ENCODE measurements at regions of chr14 and their contacts with region 1.

Region 1: GRCh38 chr14:63437953-63438757 is 105.0 kb downstream of the PPP2R5E start:
- DNase-seq: peak in 7 of 9 donors; percentile 8 to 41 (median 21)
- ATAC-seq: peak; percentile 67
- H3K4me3 ChIP-seq: no peak overlapping the region
- H3K4me3 Mint-ChIP-seq: peak overlapping the region in 9 of 10 donors; percentile 18 to 75 (median 59)
- H3K27ac ChIP-seq: no peak overlapping the region
- H3K27ac Mint-ChIP-seq: peak overlapping the region in 7 of 9 donors; percentile 2 to 82 (median 59)
- H3K4me1 ChIP-seq: peaks cover 0 to 19% of the 10 kb centered on the region in 2 donors
- H3K4me1 Mint-ChIP-seq: peaks cover 43 to 82% (median 72%) of the 10 kb centered on the region in 7 donors
- H3K27me3 ChIP-seq: no peaks in the 10 kb centered on the region
- H3K27me3 Mint-ChIP-seq: no peaks in the 10 kb centered on the region

Region 2: GRCh38 chr14:63032076-63032475 is 406.1 kb before region 1 on chr14:
- CTCF ChIA-PET with region 1: no interaction called
- POLR2A ChIA-PET with region 1: no interaction called
- intact Hi-C with region 1: no loop called
- DNase-seq: no peak
- ATAC-seq: no peak
- H3K4me3 ChIP-seq: no peak overlapping the region
- H3K4me3 Mint-ChIP-seq: no peak overlapping the region
- H3K27ac ChIP-seq: no peak overlapping the region
- H3K27ac Mint-ChIP-seq: no peak overlapping the region
- H3K4me1 ChIP-seq: no peaks in the 10 kb centered on the region
- H3K4me1 Mint-ChIP-seq: no peaks in the 10 kb centered on the region
- H3K27me3 ChIP-seq: no peaks in the 10 kb centered on the region
- H3K27me3 Mint-ChIP-seq: peaks cover 0 to 16% (median 9%) of the 10 kb centered on the region in 5 donors

Region 3: GRCh38 chr14:63453443-63453936 is 15.3 kb after region 1 on chr14:
- CTCF ChIA-PET with region 1: interaction called, 4 read pairs
- POLR2A ChIA-PET with region 1: no interaction called
- intact Hi-C with region 1: loop called in 1 of 2 experiments (anchors 2 kb)
- DNase-seq: no peak
- ATAC-seq: no peak
- H3K4me3 ChIP-seq: no peak overlapping the region
- H3K4me3 Mint-ChIP-seq: no peak overlapping the region
- H3K27ac ChIP-seq: no peak overlapping the region
- H3K27ac Mint-ChIP-seq: peak overlapping the region in 1 of 9 donors; percentile 2
- H3K4me1 ChIP-seq: no peaks in the 10 kb centered on the region
- H3K4me1 Mint-ChIP-seq: peaks cover 11 to 57% (median 34%) of the 10 kb centered on the region in 7 donors
- H3K27me3 ChIP-seq: no peaks in the 10 kb centered on the region
- H3K27me3 Mint-ChIP-seq: no peaks in the 10 kb centered on the region

Region 4: GRCh38 chr14:63478010-63478409 is 39.9 kb after region 1 on chr14:
- CTCF ChIA-PET with region 1: no interaction called
- POLR2A ChIA-PET with region 1: no interaction called
- intact Hi-C with region 1: loop called in 1 of 2 experiments (anchors 2 kb)
- DNase-seq: peak in 1 of 9 donors; percentile 14
- ATAC-seq: peak; percentile 60
- H3K4me3 ChIP-seq: peak overlapping the region; percentile 31
- H3K4me3 Mint-ChIP-seq: peak overlapping the region in 8 of 10 donors; percentile 22 to 75 (median 64)
- H3K27ac ChIP-seq: no peak overlapping the region
- H3K27ac Mint-ChIP-seq: peak overlapping the region in 4 of 9 donors; percentile 5 to 80 (median 57)
- H3K4me1 ChIP-seq: peaks cover 4 to 16% of the 10 kb centered on the region in 2 donors
- H3K4me1 Mint-ChIP-seq: peaks cover 21 to 60% (median 51%) of the 10 kb centered on the region in 7 donors
- H3K27me3 ChIP-seq: no peaks in the 10 kb centered on the region
- H3K27me3 Mint-ChIP-seq: no peaks in the 10 kb centered on the region